B cell (primary cell): ENCODE measurements at regions of chr15 and their contacts with region 1.

Region 1: GRCh38 chr15:55290528-55291057 is 980 bp upstream of the RAB27A start:
- DNase-seq: peak; percentile 88
- ATAC-seq: peak; percentile 79
- H3K4me3 ChIP-seq: peak overlapping the region; percentile 67 to 100 (median 92)
- H3K4me3 Mint-ChIP-seq: peak overlapping the region; percentile 89
- H3K27ac ChIP-seq: peak overlapping the region; percentile 72 to 93
- H3K27ac Mint-ChIP-seq: peak overlapping the region; percentile 88
- H3K4me1 ChIP-seq: peaks cover 10 to 18% of the 10 kb centered on the region in 2 donors
- H3K4me1 Mint-ChIP-seq: peaks cover 25% of the 10 kb centered on the region
- H3K27me3 ChIP-seq: no peaks in the 10 kb centered on the region
- H3K27me3 Mint-ChIP-seq: no peaks in the 10 kb centered on the region
- CTCF ChIP-seq: peak; percentile 93

Region 2: GRCh38 chr15:54681584-54681983 is 609.0 kb before region 1 on chr15:
- CTCF ChIA-PET with region 1: no interaction called
- POLR2A ChIA-PET with region 1: no interaction called
- intact Hi-C with region 1: no loop called
- DNase-seq: no peak
- ATAC-seq: no peak
- H3K4me3 ChIP-seq: no peak overlapping the region
- H3K4me3 Mint-ChIP-seq: no peak overlapping the region
- H3K27ac ChIP-seq: no peak overlapping the region
- H3K27ac Mint-ChIP-seq: no peak overlapping the region
- H3K4me1 ChIP-seq: no peaks in the 10 kb centered on the region
- H3K4me1 Mint-ChIP-seq: no peaks in the 10 kb centered on the region
- H3K27me3 ChIP-seq: no peaks in the 10 kb centered on the region
- H3K27me3 Mint-ChIP-seq: no peaks in the 10 kb centered on the region
- CTCF ChIP-seq: no peak

Region 3: DNA sequence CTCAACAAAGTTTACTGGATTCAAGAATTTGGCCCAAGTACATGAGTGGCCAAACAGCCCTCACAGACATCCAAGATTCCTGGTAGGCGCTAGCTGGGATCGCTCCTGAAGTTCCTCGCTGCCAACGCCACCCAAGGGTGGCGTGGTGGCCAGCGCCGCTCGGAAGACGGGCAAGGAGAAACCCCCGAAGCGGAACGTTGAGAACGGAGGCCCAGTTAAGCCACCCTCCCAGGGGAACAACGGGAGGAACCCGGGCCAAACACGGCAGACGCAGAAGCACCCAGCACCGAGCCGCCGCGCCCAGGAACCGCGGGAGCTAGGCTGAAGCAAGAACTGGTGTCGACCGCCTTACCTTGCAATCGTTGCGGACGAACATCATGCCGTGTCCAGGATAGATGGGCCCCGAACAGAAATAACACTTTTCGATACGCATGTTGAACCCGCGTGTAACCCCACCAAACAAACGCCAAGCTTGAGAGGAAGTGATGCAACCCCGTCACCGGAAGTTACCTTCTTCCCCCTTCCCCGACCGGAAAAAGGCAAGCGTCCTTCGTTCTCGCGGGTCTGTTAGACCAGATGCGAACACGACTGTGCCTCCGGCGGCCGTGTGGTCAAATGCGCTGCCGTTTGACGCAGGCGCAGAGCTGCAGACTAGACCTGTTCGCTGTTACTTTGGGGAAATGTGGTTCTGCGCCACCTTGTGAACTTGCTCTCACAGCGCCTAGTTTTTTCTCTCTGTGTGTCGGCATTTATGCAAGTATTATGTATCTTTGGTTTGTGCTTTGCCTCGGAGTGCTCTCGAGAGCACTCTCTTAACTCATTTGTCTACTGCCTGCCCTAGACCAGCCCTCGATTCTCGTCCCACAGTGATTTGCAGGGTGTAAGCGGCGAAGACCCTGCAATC is 93.9 kb before region 1 on chr15 and contains the start of gene RSL24D1:
- CTCF ChIA-PET with region 1: interaction called, 4 read pairs
- POLR2A ChIA-PET with region 1: no interaction called
- intact Hi-C with region 1: loop called (anchors 1 kb)
- DNase-seq: peak; percentile 98
- ATAC-seq: peak; percentile 95
- H3K4me3 ChIP-seq: peak within 1 kb of the TSS; percentile 78 to 97 (median 90)
- H3K4me3 Mint-ChIP-seq: no peak within 1 kb of the TSS
- H3K27ac ChIP-seq: peak within 1 kb of the TSS; percentile 92
- H3K27ac Mint-ChIP-seq: no peak within 1 kb of the TSS
- H3K4me1 ChIP-seq: peaks cover 29 to 30% of the 10 kb centered on the region in 2 donors
- H3K4me1 Mint-ChIP-seq: peaks cover 9% of the 10 kb centered on the region
- H3K27me3 ChIP-seq: no peaks in the 10 kb centered on the region
- H3K27me3 Mint-ChIP-seq: no peaks in the 10 kb centered on the region
- CTCF ChIP-seq: peak; percentile 67
- total RNA-seq, gene RSL24D1: 69.0 and 80.7 TPM in 2 replicates

Region 4: DNA sequence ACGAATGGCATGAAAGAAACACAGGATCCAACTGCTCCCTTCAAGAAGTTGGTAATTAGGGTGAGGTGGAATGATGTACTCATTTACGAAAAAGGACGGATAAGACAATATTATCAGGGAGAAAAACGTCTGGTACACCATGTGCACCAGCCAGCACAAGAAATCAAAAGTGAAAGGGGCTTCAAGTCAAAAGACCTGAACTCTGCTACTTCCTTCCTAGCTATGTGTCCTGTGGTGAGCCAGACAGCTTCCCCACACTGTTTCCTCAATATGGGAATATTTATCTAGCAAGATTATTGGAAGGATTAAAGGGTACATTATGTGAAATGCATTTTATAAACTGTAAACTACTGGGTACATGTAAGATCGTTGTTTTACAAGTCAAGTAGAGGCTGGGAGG is 34.9 kb before region 1 on chr15:
- CTCF ChIA-PET with region 1: interaction called, 4 read pairs
- POLR2A ChIA-PET with region 1: interaction called, 5 read pairs
- intact Hi-C with region 1: loop called (anchors 1 kb)
- DNase-seq: peak; percentile 51
- ATAC-seq: no peak
- H3K4me3 ChIP-seq: peak overlapping the region in 4 of 5 experiments; percentile 30 to 68 (median 52)
- H3K4me3 Mint-ChIP-seq: peak overlapping the region; percentile 88
- H3K27ac ChIP-seq: peak overlapping the region; percentile 54 to 74
- H3K27ac Mint-ChIP-seq: peak overlapping the region; percentile 84
- H3K4me1 ChIP-seq: peaks cover 47 to 54% of the 10 kb centered on the region in 2 donors
- H3K4me1 Mint-ChIP-seq: peaks cover 61% of the 10 kb centered on the region
- H3K27me3 ChIP-seq: no peaks in the 10 kb centered on the region
- H3K27me3 Mint-ChIP-seq: no peaks in the 10 kb centered on the region
- CTCF ChIP-seq: no peak

Region 5: DNA sequence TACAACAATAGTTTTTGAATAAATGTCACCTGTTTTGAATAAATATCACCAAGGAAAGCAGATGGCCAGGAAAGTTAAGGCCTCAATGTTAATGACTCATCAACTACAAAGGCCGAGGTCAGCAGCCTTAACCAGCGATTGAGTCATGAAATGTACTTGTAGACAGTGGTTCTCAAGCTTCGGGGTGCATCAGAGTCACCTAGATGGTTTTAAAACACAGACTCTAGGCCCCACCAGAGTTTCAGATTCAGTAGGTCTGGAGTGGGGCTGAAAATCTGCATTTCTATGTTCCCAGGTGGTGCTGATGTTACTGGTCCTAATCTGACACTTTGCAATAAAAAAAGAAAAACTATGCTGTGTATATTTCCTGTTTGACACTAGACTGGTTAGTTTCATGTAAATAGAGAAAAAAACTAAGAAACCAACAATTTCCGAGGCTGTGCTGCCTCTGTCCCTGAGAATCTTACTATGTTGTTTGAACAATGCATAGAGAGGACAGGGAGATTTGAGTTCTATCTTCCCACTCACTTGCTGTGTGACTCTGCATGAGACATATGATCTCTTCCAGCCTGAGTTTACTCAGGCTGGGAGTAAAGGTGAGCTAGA is 10.7 kb before region 1 on chr15:
- CTCF ChIA-PET with region 1: no interaction called
- POLR2A ChIA-PET with region 1: no interaction called
- intact Hi-C with region 1: loop called (anchors 2 kb)
- DNase-seq: peak; percentile 23
- ATAC-seq: peak; percentile 50
- H3K4me3 ChIP-seq: no peak overlapping the region
- H3K4me3 Mint-ChIP-seq: peak overlapping the region; percentile 44
- H3K27ac ChIP-seq: peak overlapping the region in 1 of 2 donors; percentile 74
- H3K27ac Mint-ChIP-seq: peak overlapping the region; percentile 85
- H3K4me1 ChIP-seq: peaks cover 39 to 46% of the 10 kb centered on the region in 2 donors
- H3K4me1 Mint-ChIP-seq: peaks cover 74% of the 10 kb centered on the region
- H3K27me3 ChIP-seq: no peaks in the 10 kb centered on the region
- H3K27me3 Mint-ChIP-seq: no peaks in the 10 kb centered on the region
- CTCF ChIP-seq: no peak

Region 6: GRCh38 chr15:55334997-55335396 is 44.4 kb after region 1 on chr15:
- CTCF ChIA-PET with region 1: no interaction called
- POLR2A ChIA-PET with region 1: no interaction called
- intact Hi-C with region 1: no loop called
- DNase-seq: no peak
- ATAC-seq: no peak
- H3K4me3 ChIP-seq: no peak overlapping the region
- H3K4me3 Mint-ChIP-seq: no peak overlapping the region
- H3K27ac ChIP-seq: no peak overlapping the region
- H3K27ac Mint-ChIP-seq: no peak overlapping the region
- H3K4me1 ChIP-seq: no peaks in the 10 kb centered on the region
- H3K4me1 Mint-ChIP-seq: no peaks in the 10 kb centered on the region
- H3K27me3 ChIP-seq: no peaks in the 10 kb centered on the region
- H3K27me3 Mint-ChIP-seq: no peaks in the 10 kb centered on the region
- CTCF ChIP-seq: no peak

Region 7: DNA sequence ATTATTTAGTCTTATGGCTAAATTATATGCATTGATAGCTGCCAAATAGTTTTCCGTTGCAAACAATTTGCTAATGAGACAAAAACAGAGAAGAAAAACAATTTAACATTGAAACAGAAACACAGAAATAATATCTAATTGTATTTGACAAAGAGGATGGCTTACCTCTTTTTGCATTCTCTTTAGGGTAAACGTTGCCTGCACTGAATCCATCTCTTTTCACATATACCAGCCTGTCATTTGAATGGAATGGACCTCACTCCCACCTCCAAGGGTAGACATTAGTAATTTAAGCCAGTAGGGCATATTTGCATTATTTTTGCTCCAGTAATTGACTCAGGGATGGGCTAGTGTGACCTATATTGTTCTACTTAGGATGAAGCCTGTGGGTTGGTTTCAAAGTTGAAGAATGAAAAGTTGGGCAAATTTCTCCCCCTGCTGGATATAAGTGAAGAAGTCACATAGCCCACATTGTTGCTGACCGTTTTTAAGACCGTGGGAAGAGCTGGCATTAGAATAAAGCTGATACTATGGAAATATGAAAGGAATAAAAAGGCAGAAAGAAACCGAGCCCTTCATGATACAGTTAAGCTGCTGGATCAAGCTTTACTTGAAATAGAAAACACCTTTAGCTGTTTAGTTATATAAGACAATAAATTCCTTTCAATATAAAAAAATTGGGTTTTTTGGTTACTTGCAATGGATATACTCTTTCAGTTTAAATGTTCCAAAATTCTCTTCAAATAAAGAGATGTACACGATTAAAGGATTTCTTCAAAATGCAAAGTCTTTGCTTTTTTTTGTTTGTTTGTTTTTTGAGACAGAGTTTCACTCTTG is 144.6 kb after region 1 on chr15:
- CTCF ChIA-PET with region 1: interaction called, 7 read pairs
- POLR2A ChIA-PET with region 1: no interaction called
- intact Hi-C with region 1: loop called (anchors 2 kb)
- DNase-seq: peak; percentile 57
- ATAC-seq: peak; percentile 33
- H3K4me3 ChIP-seq: no peak overlapping the region
- H3K4me3 Mint-ChIP-seq: no peak overlapping the region
- H3K27ac ChIP-seq: no peak overlapping the region
- H3K27ac Mint-ChIP-seq: no peak overlapping the region
- H3K4me1 ChIP-seq: no peaks in the 10 kb centered on the region
- H3K4me1 Mint-ChIP-seq: no peaks in the 10 kb centered on the region
- H3K27me3 ChIP-seq: no peaks in the 10 kb centered on the region
- H3K27me3 Mint-ChIP-seq: no peaks in the 10 kb centered on the region
- CTCF ChIP-seq: peak; percentile 69